ENCODE measurements at regions of chr6 and their contacts with region 1.

Region 1: DNA sequence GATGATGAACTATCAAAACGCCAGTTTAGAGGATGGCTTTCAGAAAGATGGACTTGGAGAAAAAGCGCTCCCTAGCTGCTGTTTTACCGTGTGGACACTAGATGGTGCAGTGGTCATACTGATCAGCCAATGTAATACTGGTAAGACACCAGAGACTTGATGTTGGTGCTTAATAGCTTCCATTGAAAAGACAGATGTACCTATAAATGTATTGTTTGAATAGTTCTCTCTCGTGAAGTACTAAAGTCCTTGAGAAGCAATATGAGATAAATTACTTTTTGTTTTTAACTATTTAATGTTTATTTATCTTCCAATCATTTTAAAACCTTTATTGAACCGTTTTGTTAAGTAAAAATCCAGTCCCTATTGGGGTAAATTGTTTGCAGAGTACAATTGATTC is 63.9 kb upstream of the FUCA2 start:
- DNase-seq: peak; percentile 79
- H3K4me3 ChIP-seq: no peak overlapping the region; a peak in 1 of 4 replicates
- H3K27ac ChIP-seq: no peak overlapping the region
- H3K4me1 ChIP-seq: no peaks in the 10 kb centered on the region; a peak in 2 of 4 replicates
- H3K27me3 ChIP-seq: no peaks in the 10 kb centered on the region
- CTCF ChIP-seq: peak; percentile 90
- EP300 ChIP-seq: no peak
- RAD21 ChIP-seq: peak; percentile 97

Region 2: DNA sequence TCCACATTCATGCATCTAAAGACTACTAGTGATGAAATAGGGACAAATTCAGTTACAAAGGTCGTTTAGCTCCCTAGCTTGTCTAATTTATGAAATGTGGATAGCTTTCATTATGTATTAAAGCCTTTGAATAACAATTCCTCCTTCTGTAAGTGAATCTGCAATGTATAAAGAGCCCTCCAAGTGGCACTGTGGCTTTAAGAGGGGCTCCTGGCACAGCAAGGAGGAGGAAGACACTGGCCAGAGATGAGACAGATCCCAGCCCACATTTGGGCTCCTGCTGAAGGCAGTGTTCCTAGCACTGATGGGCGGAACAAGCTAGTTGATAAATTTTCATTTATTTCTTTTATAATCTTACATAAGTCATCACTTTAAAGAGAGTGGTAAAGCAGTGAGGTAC is 46.3 kb before region 1 on chr6:
- CTCF ChIA-PET with region 1: no interaction called
- POLR2A ChIA-PET with region 1: no interaction called
- DNase-seq: peak; percentile 41
- H3K4me3 ChIP-seq: no peak overlapping the region; a peak in 1 of 4 replicates
- H3K27ac ChIP-seq: no peak overlapping the region
- H3K4me1 ChIP-seq: no peaks in the 10 kb centered on the region; a peak in 1 of 4 replicates
- H3K27me3 ChIP-seq: no peaks in the 10 kb centered on the region
- CTCF ChIP-seq: peak; percentile 43
- EP300 ChIP-seq: no peak
- RAD21 ChIP-seq: peak; percentile 56

Region 3: GRCh38 chr6:143559051-143559660 is 16.3 kb before region 1 on chr6:
- CTCF ChIA-PET with region 1: interaction called, 21 read pairs
- POLR2A ChIA-PET with region 1: no interaction called
- DNase-seq: no peak
- H3K4me3 ChIP-seq: no peak overlapping the region
- H3K27ac ChIP-seq: no peak overlapping the region
- H3K4me1 ChIP-seq: peaks cover 5 to 13% of the 10 kb centered on the region in 2 experiments; a peak in 3 of 4 replicates
- H3K27me3 ChIP-seq: no peaks in the 10 kb centered on the region
- CTCF ChIP-seq: no peak
- EP300 ChIP-seq: no peak
- RAD21 ChIP-seq: no peak

Region 4: DNA sequence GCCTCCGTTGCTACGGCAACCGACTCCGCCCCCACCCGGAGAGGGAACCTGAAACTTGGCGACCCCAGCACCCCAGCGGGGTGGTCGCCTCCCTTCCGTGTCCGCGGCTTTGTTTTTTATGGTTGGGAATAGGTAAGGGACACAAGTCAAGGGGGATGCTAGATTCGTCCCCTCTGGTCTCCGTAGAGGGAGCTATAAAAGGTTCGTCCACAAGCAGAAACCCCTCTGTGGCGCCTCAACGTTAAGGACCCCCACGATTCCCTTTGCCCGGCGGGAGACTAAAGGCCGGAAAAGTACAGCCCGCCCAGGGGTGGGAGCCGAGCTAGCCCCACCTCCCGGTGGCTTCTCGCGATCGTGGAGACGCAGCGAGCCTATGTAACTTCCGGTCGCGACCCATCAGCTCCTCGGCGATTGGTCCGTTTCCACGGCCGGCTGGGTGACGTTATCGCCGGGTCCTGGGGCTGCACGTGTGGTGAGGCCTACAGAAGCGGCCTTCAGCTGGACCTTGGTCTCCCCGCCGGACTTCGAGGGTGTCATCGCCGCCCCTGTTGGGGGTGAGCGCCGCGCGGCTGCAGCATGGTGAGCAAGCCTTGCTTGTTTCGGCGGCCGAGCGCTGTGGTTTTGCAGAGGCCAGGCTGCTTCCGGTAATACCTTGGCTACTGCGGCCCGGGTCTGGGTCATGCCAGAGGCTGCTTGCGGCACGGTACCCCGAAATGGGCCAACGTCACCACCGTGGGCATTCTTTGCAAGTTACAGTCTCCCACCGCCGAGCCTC is 267.6 kb after region 1 on chr6 and contains the start of gene LTV1:
- CTCF ChIA-PET with region 1: interaction called, 15 read pairs
- POLR2A ChIA-PET with region 1: interaction called, 4 read pairs
- DNase-seq: peak; percentile 97
- H3K4me3 ChIP-seq: peak within 1 kb of the TSS; percentile 83 to 97
- H3K27ac ChIP-seq: peak within 1 kb of the TSS; percentile 81 to 86
- H3K4me1 ChIP-seq: peaks cover 0 to 3% of the 10 kb centered on the region in 2 experiments; a peak in 2 of 4 replicates
- H3K27me3 ChIP-seq: no peaks in the 10 kb centered on the region
- CTCF ChIP-seq: no peak
- EP300 ChIP-seq: no peak
- RAD21 ChIP-seq: no peak
- polyA plus RNA-seq, gene LTV1: 19.4 and 20.6 TPM in 2 replicates

Region 5: GRCh38 chr6:143940011-143940597 is 364.7 kb after region 1 on chr6:
- CTCF ChIA-PET with region 1: interaction called, 25 read pairs
- POLR2A ChIA-PET with region 1: no interaction called
- DNase-seq: peak; percentile 63
- H3K4me3 ChIP-seq: no peak overlapping the region
- H3K27ac ChIP-seq: no peak overlapping the region
- H3K4me1 ChIP-seq: no peaks in the 10 kb centered on the region
- H3K27me3 ChIP-seq: no peaks in the 10 kb centered on the region
- CTCF ChIP-seq: peak; percentile 65
- EP300 ChIP-seq: no peak
- RAD21 ChIP-seq: peak; percentile 48

Region 6: GRCh38 chr6:144008120-144008811 is 432.8 kb after region 1 on chr6 and contains the start of gene PLAGL1:
- CTCF ChIA-PET with region 1: interaction called, 142 read pairs
- POLR2A ChIA-PET with region 1: no interaction called
- DNase-seq: peak; percentile 68
- H3K4me3 ChIP-seq: peak within 1 kb of the TSS; percentile 17 to 55; a peak in 3 of 4 replicates
- H3K27ac ChIP-seq: peak within 1 kb of the TSS in 1 of 2 experiments; percentile 49; a peak in 3 of 4 replicates
- H3K4me1 ChIP-seq: no peaks in the 10 kb centered on the region
- H3K27me3 ChIP-seq: no peaks in the 10 kb centered on the region
- CTCF ChIP-seq: no peak
- EP300 ChIP-seq: no peak
- RAD21 ChIP-seq: no peak
- polyA plus RNA-seq, gene PLAGL1: 22.6 and 25.8 TPM in 2 replicates

Region 7: DNA sequence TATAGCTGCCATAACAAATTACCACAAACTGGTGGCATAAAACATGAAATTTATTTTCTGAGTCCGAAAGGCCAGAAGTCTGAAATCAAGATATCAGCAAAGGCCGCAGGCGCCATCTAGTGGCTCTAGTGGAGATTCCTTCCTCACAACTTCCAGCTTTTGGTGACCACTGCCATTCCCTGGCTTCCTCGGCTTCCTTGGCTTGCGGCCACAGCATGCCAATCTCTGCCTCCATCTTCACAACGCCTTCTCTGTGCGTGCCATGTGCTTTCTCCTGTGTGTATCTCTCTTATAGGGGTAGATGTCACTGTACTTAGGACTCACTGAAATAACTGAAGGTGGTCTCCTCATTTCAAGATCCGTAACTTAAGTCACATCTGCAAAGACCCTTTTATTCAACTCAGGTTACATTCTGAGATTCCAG is 438.1 kb after region 1 on chr6:
- CTCF ChIA-PET with region 1: interaction called, 142 read pairs
- POLR2A ChIA-PET with region 1: no interaction called
- DNase-seq: peak; percentile 66
- H3K4me3 ChIP-seq: peak overlapping the region in 1 of 2 experiments; percentile 27; a peak in 1 of 4 replicates
- H3K27ac ChIP-seq: no peak overlapping the region
- H3K4me1 ChIP-seq: no peaks in the 10 kb centered on the region
- H3K27me3 ChIP-seq: no peaks in the 10 kb centered on the region
- CTCF ChIP-seq: peak; percentile 83
- EP300 ChIP-seq: no peak
- RAD21 ChIP-seq: peak; percentile 92

Region 8: DNA sequence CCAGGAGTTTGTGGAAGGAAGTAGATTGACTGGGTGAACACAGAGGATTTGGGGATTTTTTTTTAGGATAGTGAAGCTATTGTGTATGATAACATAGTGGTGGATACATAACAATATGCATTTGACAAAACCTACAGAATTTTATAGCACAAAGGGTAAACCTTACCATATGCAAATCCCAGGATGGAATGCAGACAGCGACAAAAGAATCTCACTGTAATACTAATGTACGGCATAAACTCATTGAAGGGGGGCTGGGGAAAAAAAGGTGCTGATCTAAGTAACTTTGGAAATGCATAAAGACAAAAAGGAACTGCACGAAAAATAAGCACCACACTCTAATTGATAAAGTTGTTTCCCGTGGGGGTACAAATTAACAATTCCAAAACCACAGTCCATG is 447.8 kb after region 1 on chr6:
- CTCF ChIA-PET with region 1: interaction called, 12 read pairs
- POLR2A ChIA-PET with region 1: no interaction called
- DNase-seq: no peak
- H3K4me3 ChIP-seq: no peak overlapping the region
- H3K27ac ChIP-seq: no peak overlapping the region
- H3K4me1 ChIP-seq: no peaks in the 10 kb centered on the region
- H3K27me3 ChIP-seq: no peaks in the 10 kb centered on the region; the same call in 1 of the 2 replicates
- CTCF ChIP-seq: no peak
- EP300 ChIP-seq: no peak
- RAD21 ChIP-seq: no peak

Measured in SK-N-SH (cell line).